MCF 10A (cell line): ENCODE measurements at regions of chr10 and their contacts with region 1.

Region 1: GRCh38 chr10:90871766-90872647 is at the start of gene RPP30:
- DNase-seq: peak; percentile 83
- H3K4me3 Mint-ChIP-seq: peak within 1 kb of the TSS; percentile 98
- H3K27ac Mint-ChIP-seq: peak within 1 kb of the TSS; percentile 91
- H3K4me1 Mint-ChIP-seq: peaks cover 24% of the 10 kb centered on the region
- H3K27me3 Mint-ChIP-seq: no peaks in the 10 kb centered on the region
- CTCF ChIP-seq: no peak
- total RNA-seq, gene RPP30: 39.9 and 41.8 TPM in 2 replicates

Region 2: DNA sequence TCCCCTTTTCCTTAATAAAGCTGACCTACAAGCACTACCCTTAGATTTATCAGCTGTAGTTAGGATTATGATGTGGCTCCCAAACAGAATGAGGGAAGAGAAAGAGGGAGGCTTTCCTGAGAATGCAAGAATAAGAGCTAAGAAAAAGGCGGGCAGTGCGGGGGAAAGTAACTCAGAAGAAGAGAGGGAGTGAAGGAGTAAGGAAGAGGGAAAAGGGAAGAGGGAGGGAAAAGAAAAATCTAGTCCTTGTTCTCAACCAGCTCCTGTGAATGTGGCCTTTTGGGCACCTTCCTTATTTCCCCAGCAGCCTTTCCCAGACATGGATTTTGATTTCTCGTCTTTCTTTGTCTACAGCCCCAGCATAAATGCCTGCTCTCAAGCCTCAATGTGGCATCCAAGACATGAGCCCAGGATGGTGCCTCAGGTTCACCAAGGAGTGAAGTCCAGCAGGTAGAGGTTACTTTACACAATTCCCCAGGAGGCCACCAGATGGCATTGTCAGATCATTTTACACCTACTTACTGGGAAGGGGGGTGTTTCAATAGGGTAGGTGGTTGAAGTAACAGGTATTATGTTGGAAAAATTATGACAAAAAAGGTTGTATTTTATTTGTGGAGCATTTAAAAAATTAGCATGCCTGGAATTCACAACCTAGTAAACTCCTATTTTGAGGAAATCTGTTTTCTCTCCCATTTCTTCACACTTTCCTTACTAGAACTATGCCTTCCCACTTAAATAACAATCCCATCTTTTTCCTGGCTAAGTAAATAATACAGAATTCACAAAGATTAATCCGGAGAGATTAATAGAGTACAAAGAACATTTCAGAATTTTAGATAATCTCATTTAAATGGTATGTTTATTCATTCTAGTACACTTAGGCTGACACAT is 120.7 kb before region 1 on chr10:
- CTCF ChIA-PET with region 1: interaction called, 149 read pairs
- POLR2A ChIA-PET with region 1: interaction called, 11 read pairs
- intact Hi-C with region 1: loop called (anchors 2 kb)
- DNase-seq: peak; percentile 71
- H3K4me3 Mint-ChIP-seq: no peak overlapping the region
- H3K27ac Mint-ChIP-seq: no peak overlapping the region
- H3K4me1 Mint-ChIP-seq: peaks cover 16% of the 10 kb centered on the region
- H3K27me3 Mint-ChIP-seq: no peaks in the 10 kb centered on the region
- CTCF ChIP-seq: peak; percentile 91